ENCODE measurements at regions of chr1 and their contacts with region 1.

Region 1: DNA sequence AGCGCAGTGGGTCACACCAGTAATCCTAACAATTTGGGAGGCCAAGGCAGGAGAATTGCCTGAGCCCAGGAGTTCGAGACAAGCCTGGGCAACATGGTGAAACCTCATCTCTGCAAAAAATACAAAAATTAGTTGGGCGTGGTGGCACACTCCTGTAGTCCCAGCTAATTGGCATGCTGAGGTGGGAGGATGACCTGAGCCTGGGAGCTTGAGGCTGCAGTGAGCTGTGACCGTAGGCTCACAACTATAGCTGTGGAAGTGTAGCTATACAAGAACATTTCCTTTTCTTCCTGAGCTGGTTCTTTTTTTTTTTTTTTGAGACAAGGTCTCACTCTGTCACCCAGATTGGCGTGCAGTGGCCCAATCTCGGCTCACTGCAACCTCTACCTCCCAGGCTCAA is 19.1 kb upstream of the ZNF697 start:
- DNase-seq: no peak
- H3K4me3 ChIP-seq: no peak overlapping the region
- H3K27ac ChIP-seq: no peak overlapping the region
- H3K4me1 ChIP-seq: peaks cover 0 to 5% (median 2%) of the 10 kb centered on the region in 4 donors
- H3K27me3 ChIP-seq: no peaks in the 10 kb centered on the region
- CTCF ChIP-seq: no peak
- EP300 ChIP-seq: no peak
- POLR2A ChIP-seq: no peak

Region 2: GRCh38 chr1:119613769-119614720 is 53.1 kb before region 1 on chr1:
- intact Hi-C with region 1: loop called (anchors 5 kb)
- DNase-seq: peak; percentile 89 to 96
- H3K4me3 ChIP-seq: no peak overlapping the region
- H3K27ac ChIP-seq: no peak overlapping the region
- H3K4me1 ChIP-seq: peaks cover 0 to 25% (median 10%) of the 10 kb centered on the region in 4 donors
- H3K27me3 ChIP-seq: no peaks in the 10 kb centered on the region
- CTCF ChIP-seq: peak in 5 of 7 experiments; percentile 57 to 83 (median 71)
- EP300 ChIP-seq: no peak
- POLR2A ChIP-seq: no peak

Region 3: DNA sequence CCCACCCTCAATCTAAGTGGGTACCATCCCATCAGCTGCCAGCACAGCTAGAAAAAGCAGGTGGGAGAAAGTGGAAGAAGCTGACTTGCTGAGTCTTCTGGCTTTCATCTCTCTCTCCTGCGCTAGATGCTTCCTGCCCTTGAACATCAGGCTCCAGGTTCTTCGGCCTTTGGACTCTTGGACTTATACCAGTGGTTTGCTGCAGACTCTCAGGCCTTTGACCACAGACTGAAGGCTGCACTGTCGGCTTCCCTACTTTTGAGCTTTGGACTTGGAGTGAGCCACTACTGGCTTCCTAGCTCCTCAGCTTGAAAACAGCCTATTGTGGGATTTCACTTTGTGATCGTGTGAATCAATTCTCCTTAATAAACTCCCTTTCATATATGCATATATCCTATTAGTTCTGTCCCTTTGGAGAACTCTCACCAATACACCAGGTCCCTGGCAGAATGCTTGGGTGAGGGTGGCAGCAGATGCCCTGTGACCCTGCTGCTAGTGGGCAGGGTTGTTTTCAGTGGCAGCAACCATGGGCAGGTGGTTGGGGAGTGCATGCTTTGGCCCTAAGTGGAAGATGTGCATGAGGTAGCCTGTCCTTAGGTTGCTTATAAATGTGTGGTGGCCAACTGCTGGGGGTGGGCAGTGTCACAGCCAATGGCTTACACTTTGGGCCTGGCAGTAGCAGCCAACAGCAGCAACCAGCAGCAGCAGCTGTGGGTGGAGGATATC is 239.9 kb after region 1 on chr1:
- intact Hi-C with region 1: no loop called
- DNase-seq: no peak
- H3K4me3 ChIP-seq: no peak overlapping the region
- H3K27ac ChIP-seq: no peak overlapping the region
- H3K4me1 ChIP-seq: no peaks in the 10 kb centered on the region
- H3K27me3 ChIP-seq: no peaks in the 10 kb centered on the region
- CTCF ChIP-seq: no peak
- EP300 ChIP-seq: no peak
- POLR2A ChIP-seq: no peak